ENCODE measurements at regions of chr1 and their contacts with region 1.

Region 1: DNA sequence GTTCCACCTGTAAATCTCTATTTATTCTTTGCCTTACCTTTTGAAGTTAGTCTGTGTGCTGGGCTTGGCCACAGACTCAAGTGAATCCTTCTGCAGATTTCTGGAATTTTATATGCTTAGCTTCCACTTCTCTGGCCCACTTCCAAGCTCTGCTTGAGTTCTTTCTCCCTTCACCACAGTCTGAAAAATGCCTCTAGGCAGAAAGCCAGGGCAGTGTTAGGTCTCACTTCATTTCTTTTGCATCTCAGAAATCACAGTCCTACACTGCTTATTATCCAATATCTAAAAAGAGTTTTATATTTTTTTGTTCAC is 48.9 kb downstream of the INKA2 start:
- DNase-seq: peak; percentile 100
- H3K4me3 ChIP-seq: no peak overlapping the region
- CTCF ChIP-seq: no peak

Region 2: GRCh38 chr1:111639602-111640198 is 50.6 kb before region 1 on chr1:
- in situ Hi-C with region 1: no loop called
- DNase-seq: no peak
- H3K4me3 ChIP-seq: no peak overlapping the region
- CTCF ChIP-seq: no peak

Region 3: DNA sequence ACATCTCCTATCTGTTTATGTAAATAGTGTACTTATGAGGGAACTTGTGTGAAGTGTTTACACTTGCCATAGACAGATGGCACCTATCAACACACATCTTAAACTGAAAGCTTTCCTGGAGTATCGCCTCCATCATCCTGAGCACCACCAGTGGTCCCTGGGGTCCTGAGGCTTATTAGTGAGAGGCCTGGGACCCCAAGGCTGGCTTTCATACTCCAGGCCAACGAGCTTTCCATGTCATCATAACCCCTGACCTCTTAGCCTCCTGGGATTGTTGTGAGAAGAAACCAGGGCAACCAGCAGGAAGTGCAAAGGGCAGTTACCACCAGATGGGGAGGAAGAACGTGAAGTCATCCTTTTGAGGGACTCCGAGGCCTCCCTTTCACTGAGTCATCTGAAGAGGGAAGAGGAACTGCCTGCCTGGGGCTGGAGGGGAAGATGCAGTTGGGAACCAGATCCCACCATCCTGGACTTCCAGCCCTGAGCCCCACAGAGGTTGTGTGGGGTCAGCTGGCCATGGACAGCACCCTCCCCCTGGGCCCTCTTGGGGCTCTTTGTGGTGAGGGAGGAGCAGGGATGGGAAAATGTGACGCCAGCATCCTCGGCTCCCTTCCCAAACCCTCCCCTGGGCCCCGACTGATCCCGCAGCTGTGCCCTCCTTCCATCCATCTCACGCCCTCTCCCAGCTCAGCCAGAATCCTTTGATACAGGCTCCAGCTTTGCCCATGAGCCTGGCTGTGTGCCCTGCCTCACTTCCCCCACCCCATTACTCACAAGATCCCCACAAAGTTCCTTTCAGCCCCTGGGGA is 43.1 kb after region 1 on chr1:
- in situ Hi-C with region 1: loop called (anchors 5 kb)
- DNase-seq: no peak
- H3K4me3 ChIP-seq: no peak overlapping the region
- CTCF ChIP-seq: no peak